PC-9 (cell line): ENCODE measurements at regions of chr4 and their contacts with region 1.

Region 1: GRCh38 chr4:80184053-80184790 is 13.1 kb upstream of the PRDM8 start:
- DNase-seq: peak in 1 of 2 experiments; percentile 72
- H3K4me3 ChIP-seq: peak overlapping the region; percentile 74
- H3K27ac ChIP-seq: no peak overlapping the region
- H3K4me1 ChIP-seq: no peaks in the 10 kb centered on the region
- H3K27me3 ChIP-seq: no peaks in the 10 kb centered on the region
- CTCF ChIP-seq: peak; percentile 72

Region 2: GRCh38 chr4:79241846-79242245 is 942.4 kb before region 1 on chr4:
- CTCF ChIA-PET with region 1: no interaction called
- POLR2A ChIA-PET with region 1: no interaction called
- intact Hi-C with region 1: loop called (anchors 5 kb)
- DNase-seq: no peak
- H3K4me3 ChIP-seq: no peak overlapping the region
- H3K27ac ChIP-seq: no peak overlapping the region
- H3K4me1 ChIP-seq: no peaks in the 10 kb centered on the region
- H3K27me3 ChIP-seq: no peaks in the 10 kb centered on the region
- CTCF ChIP-seq: no peak

Region 3: DNA sequence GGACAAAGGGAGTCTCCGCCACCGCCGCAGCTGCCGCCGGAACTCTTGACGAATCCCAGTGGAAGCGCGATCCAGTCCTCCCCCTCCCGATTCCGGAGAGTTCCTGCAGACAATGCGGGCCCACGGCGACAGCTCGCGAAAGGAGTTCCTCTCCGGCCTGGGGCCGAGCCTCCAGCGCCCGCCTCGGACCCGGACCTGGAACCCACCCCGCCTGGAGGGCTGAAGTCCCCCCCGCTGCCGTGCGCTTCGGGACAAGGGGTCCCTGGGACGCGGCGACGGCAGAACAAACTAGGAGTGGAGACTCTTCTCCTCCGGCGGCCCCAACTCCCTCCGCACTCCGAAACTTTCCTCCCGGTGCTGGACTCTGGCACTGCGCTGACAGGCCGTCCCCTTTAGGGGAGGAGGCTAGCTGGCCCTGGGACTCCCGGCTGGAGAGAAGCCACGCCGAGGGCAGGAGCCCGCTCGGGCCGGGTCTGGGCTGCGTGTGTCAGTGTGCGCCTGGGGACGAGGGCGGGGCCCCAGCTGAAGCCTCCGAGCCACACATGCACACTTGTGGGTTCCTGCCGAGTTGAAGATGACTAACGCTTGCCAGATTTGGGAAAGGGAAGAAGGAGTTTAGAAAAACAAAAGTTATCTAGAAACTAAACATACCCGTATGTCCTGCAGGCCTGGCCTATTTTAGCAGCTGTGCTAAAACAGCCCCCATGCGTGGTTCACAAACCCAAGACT is 111.3 kb before region 1 on chr4 and contains the start of gene ANTXR2:
- CTCF ChIA-PET with region 1: no interaction called
- POLR2A ChIA-PET with region 1: no interaction called
- intact Hi-C with region 1: loop called (anchors 10 kb)
- DNase-seq: peak; percentile 62 to 71
- H3K4me3 ChIP-seq: peak within 1 kb of the TSS; percentile 70
- H3K27ac ChIP-seq: no peak within 1 kb of the TSS
- H3K4me1 ChIP-seq: peaks cover 21% of the 10 kb centered on the region
- H3K27me3 ChIP-seq: no peaks in the 10 kb centered on the region
- CTCF ChIP-seq: no peak
- total RNA-seq, gene ANTXR2: 2.0 and 3.0 TPM in 2 replicates

Region 4: GRCh38 chr4:80125252-80126177 is 58.7 kb before region 1 on chr4:
- CTCF ChIA-PET with region 1: no interaction called
- POLR2A ChIA-PET with region 1: no interaction called
- intact Hi-C with region 1: loop called (anchors 10 kb)
- DNase-seq: no peak
- H3K4me3 ChIP-seq: no peak overlapping the region
- H3K27ac ChIP-seq: no peak overlapping the region
- H3K4me1 ChIP-seq: peaks cover 12% of the 10 kb centered on the region
- H3K27me3 ChIP-seq: no peaks in the 10 kb centered on the region
- CTCF ChIP-seq: peak; percentile 47

Region 5: DNA sequence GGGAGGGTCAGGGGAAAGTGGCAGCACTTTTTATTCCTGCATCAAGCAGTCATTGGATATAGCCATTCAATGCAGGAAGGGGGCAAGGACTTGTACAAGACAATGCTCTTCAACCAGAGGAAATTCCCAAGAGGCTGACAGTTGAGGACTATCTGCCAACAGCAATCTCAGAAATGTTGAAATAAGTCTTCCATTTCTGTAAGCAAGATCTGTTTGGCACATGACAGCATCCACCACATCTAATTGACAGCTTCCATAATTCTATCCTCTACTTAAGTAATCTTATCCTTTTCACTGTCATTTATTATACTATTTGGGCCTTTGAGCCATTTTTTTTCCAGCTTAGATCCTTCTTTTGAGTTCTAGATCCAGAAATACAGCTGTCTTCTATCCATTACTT is 262.0 kb after region 1 on chr4:
- CTCF ChIA-PET with region 1: no interaction called
- POLR2A ChIA-PET with region 1: no interaction called
- intact Hi-C with region 1: no loop called
- DNase-seq: no peak
- H3K4me3 ChIP-seq: no peak overlapping the region
- H3K27ac ChIP-seq: peak overlapping the region; percentile 41
- H3K4me1 ChIP-seq: no peaks in the 10 kb centered on the region
- H3K27me3 ChIP-seq: no peaks in the 10 kb centered on the region
- CTCF ChIP-seq: no peak